ENCODE measurements at regions of chr3 and their contacts with region 1.

Region 1: GRCh38 chr3:142828703-142829305 is 60.1 kb downstream of the PCOLCE2 start:
- DNase-seq: peak; percentile 31
- ATAC-seq: peak; percentile 100
- H3K4me3 ChIP-seq: no peak overlapping the region
- H3K27ac ChIP-seq: no peak overlapping the region
- H3K4me1 ChIP-seq: no peaks in the 10 kb centered on the region
- H3K27me3 ChIP-seq: no peaks in the 10 kb centered on the region
- CTCF ChIP-seq: peak; percentile 88 to 94 (median 92); a peak in 5 of 6 replicates
- EP300 ChIP-seq: no peak
- POLR2A ChIP-seq: no peak
- RAD21 ChIP-seq: peak; percentile 88

Region 2: GRCh38 chr3:142808103-142808917 is 20.5 kb before region 1 on chr3:
- CTCF ChIA-PET with region 1: interaction called, 17 read pairs
- POLR2A ChIA-PET with region 1: no interaction called
- RAD21 ChIA-PET with region 1: interaction called, 10 read pairs
- SMC1A ChIA-PET with region 1: interaction called, 9 read pairs
- in situ Hi-C with region 1: no loop called
- intact Hi-C with region 1: no loop called
- DNase-seq: no peak
- ATAC-seq: peak; percentile 60
- H3K4me3 ChIP-seq: no peak overlapping the region
- H3K27ac ChIP-seq: no peak overlapping the region
- H3K4me1 ChIP-seq: no peaks in the 10 kb centered on the region
- H3K27me3 ChIP-seq: no peaks in the 10 kb centered on the region
- CTCF ChIP-seq: no peak
- EP300 ChIP-seq: no peak; a peak in 1 of 4 replicates
- POLR2A ChIP-seq: no peak
- RAD21 ChIP-seq: no peak

Region 3: DNA sequence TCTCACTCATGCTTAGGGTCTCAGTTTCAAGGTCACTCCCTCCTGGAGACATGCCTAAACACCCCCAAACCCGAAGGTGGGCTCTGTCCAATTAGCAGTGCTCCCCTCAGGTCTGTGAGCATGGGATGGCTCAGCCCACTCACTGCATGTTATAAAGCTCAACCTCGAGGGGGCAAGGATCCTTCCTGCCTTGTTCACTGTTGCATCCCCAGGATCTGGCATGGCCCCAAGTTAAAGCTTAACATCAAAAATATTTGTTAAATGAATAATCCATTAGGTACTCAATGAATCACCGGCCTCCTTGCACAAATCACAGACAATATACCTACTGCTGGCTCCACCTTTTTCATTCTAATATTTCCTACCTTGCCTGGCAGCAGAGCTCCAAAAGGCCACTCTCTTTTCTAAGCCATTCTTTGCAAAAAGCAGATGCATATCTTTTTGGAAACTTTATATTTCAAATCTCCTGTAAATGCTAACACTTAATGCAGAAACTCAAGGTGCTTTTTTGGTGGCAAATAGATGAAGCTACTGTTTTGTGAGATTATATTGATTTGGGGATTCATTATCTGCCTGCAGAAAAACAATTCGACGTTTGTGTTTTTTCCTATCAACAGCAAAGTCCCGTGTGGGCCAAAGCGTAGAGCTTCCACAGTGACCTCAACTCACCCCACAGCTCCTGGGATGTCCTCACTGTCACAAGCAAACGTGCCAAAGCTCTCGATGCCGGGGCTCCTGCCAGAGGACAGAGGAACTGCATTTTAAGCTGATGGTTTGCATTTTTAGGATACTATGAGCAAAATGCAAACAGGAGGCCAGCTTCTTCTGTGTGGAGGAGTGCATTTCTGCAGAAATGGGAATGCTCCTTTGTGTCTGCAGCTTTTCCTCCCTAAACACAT is 24.7 kb after region 1 on chr3:
- CTCF ChIA-PET with region 1: interaction called, 10 read pairs
- POLR2A ChIA-PET with region 1: no interaction called
- RAD21 ChIA-PET with region 1: interaction called, 6 read pairs
- SMC1A ChIA-PET with region 1: interaction called, 3 read pairs
- in situ Hi-C with region 1: no loop called
- intact Hi-C with region 1: no loop called
- DNase-seq: no peak
- ATAC-seq: no peak; the same call in 2 of the 3 replicates
- H3K4me3 ChIP-seq: no peak overlapping the region
- H3K27ac ChIP-seq: no peak overlapping the region
- H3K4me1 ChIP-seq: no peaks in the 10 kb centered on the region
- H3K27me3 ChIP-seq: no peaks in the 10 kb centered on the region; a peak in 1 of 4 replicates
- CTCF ChIP-seq: no peak
- EP300 ChIP-seq: no peak
- POLR2A ChIP-seq: no peak
- RAD21 ChIP-seq: no peak

Region 4: DNA sequence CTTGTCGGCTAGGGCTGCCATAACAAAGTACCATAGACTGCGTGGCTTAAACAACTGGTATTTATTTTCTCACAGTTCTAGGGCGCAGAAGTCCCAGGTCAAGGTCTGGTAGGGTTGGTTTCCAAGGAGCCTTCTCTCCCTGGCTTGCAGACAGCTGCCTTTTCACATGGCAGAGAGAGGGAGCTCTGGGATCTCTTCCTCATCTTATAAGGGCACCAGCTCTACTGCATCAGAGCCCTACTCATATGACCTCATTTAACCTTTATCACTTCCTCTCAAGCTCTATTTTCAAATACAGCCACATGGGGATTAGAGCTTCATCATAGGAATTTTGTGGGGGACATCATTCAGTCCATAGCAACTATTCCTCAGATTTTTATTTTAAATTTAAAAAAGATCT is 152.3 kb after region 1 on chr3:
- CTCF ChIA-PET with region 1: interaction called, 58 read pairs
- POLR2A ChIA-PET with region 1: no interaction called
- RAD21 ChIA-PET with region 1: interaction called, 19 read pairs
- SMC1A ChIA-PET with region 1: interaction called, 25 read pairs
- in situ Hi-C with region 1: no loop called
- intact Hi-C with region 1: loop called (anchors 2 kb)
- DNase-seq: no peak
- ATAC-seq: no peak
- H3K4me3 ChIP-seq: no peak overlapping the region
- H3K27ac ChIP-seq: no peak overlapping the region
- H3K4me1 ChIP-seq: no peaks in the 10 kb centered on the region
- H3K27me3 ChIP-seq: no peaks in the 10 kb centered on the region
- CTCF ChIP-seq: no peak
- EP300 ChIP-seq: no peak
- POLR2A ChIP-seq: no peak
- RAD21 ChIP-seq: no peak

Region 5: DNA sequence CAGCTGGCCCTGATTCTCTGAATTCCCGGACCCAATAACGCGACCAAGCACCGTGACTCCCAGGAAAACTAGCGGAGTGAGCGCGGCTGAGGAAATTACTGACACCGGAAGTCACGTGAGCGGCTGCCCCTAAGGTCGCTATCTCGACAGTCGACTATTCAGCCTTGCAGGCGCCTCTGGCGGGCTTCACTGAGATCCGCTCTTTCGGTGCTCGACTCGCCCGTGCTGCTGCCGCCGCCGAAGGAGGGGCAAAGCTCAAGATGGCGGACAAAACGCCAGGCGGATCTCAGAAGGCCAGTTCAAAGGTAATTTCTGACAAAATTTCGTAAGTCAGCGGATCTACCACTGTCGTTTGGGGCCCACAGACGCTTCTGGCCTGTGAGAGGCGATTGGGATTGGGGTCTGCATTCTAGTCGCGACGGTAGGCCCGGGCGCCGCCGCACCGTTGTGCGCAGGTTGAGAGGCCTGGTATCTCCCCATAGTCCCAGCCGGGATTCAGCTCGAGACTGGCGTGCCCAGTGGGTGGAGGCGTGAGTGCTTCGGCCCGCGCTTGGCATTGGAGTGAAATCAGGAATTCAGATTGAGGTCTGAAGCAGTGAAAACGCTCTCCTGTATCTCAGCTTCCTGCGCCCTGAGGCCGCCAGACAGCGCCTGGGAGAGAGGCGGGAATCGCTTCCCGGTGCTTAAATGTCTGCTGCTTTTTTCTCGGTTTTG is 172.7 kb after region 1 on chr3 and contains the start of gene U2SURP:
- CTCF ChIA-PET with region 1: interaction called, 136 read pairs
- POLR2A ChIA-PET with region 1: no interaction called
- RAD21 ChIA-PET with region 1: interaction called, 43 read pairs
- SMC1A ChIA-PET with region 1: interaction called, 17 read pairs
- in situ Hi-C with region 1: no loop called
- intact Hi-C with region 1: no loop called
- DNase-seq: peak; percentile 81
- ATAC-seq: peak; percentile 89
- H3K4me3 ChIP-seq: peak within 1 kb of the TSS; percentile 88
- H3K27ac ChIP-seq: peak within 1 kb of the TSS; percentile 89
- H3K4me1 ChIP-seq: peaks cover 2% of the 10 kb centered on the region; the same call in 1 of the 2 replicates
- H3K27me3 ChIP-seq: no peaks in the 10 kb centered on the region
- CTCF ChIP-seq: no peak
- EP300 ChIP-seq: peak in 1 of 2 experiments; percentile 31; a peak in 1 of 4 replicates
- POLR2A ChIP-seq: peak; percentile 87
- RAD21 ChIP-seq: no peak
- polyA plus RNA-seq, gene U2SURP: 146 to 277 TPM

Measured in GM12878 (cell line).